Head of caudate nucleus (tissue), 42 donors: ENCODE measurements at regions of chr1 and their contacts with region 1.

Region 1: DNA sequence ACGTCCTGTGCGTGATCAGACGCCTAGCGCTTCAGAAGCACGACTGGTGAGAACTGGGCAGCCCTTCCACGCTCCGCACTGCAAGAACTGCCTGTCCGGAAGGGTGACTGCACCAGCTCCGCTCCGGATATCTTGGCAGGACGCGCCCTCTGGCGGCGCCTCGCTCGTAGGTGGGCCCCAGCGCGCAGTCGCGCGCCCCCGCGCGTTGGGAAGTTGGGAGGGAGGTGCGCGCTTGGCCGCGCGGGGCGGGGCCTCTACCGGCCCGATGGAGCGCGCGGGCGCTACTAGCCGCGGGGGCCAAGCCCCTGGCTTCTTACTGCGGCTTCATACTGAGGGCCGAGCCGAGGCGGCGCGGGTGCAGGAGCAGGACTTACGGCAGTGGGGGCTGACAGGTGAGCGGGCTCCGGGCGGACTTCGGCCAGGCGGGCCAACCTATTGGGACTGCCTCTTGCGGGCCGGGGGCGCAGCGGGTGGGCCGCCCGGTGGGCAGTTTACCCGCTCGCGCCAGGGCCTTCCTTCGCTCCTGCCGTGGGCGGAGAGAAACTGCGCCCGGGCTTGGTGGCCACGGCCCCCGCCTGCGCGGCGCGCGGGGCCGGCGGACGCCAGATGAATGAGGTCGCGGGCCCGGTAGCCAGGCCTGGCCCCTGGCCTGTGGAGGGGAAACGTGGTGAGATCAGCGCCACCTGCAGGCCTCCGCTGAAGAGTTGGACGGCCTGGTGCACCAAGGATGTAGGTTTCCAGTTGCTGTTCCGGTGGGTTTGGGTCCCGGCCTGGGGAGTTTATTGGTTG is at the start of gene CHD1L:
- DNase-seq: peak; percentile 86 to 98 (median 96)

Region 2: GRCh38 chr1:147162093-147162492 is 80.5 kb before region 1 on chr1:
- intact Hi-C with region 1: no loop called
- DNase-seq: no peak

Region 3: DNA sequence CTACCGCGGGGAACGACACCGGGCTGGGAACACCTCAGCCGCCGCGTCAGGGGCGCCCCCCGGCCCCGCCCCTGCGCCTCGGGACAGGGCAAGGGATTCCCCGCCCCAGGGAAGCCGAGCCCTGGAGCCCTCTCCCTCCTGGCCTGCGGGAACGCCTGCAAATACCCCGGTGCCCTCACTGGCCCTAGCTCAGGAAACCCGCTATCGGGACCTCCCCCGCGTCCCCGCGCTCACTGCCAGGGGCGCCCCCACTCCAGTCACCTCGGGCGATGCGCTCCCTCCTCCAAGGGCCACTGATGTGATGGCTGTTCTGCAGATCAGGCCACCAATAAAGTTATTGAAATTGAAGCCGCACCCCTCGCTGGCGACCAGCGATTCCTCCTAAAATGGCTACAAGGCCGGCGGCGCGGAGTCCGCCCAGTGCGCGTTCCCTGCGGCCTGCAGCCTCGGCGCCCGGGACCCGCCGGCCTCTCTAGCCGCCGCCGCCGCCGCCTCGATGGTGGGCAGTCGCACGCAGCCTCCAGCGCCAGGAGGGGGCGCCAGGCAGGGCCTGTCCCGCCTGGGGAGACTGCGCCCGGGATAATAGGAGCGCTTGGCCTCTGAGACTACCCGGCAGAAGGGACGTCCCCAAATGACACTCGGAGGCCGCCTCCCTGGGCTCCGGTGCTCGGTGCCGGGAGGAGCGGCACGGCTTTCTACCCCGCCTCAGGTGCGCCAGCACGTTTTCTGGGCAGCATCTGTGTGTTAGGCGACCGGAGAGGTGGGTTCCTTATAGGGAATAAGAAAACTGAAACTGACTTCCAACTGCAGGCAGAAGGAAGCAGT is 70.3 kb before region 1 on chr1 and contains the start of gene PRKAB2:
- intact Hi-C with region 1: loop called (anchors 1 kb)
- DNase-seq: peak; percentile 89 to 98 (median 96)

Region 4: GRCh38 chr1:147618077-147618569 is 375.5 kb after region 1 on chr1:
- intact Hi-C with region 1: no loop called
- DNase-seq: peak in 8 of 42 donors; percentile 10 to 69 (median 44)